CD4-positive, alpha-beta T cell (primary cell): ENCODE measurements at regions of chr16 and their contacts with region 1.

Region 1: GRCh38 chr16:81623363-81624102 is 155.6 kb upstream of the PLCG2 start:
- DNase-seq: peak; percentile 32 to 77 (median 58)
- ATAC-seq: peak; percentile 59
- H3K4me3 ChIP-seq: no peak overlapping the region
- H3K4me3 Mint-ChIP-seq: no peak overlapping the region
- H3K27ac ChIP-seq: no peak overlapping the region
- H3K27ac Mint-ChIP-seq: peak overlapping the region; percentile 43
- H3K4me1 ChIP-seq: peaks cover 12% of the 10 kb centered on the region
- H3K4me1 Mint-ChIP-seq: peaks cover 13% of the 10 kb centered on the region
- H3K27me3 ChIP-seq: no peaks in the 10 kb centered on the region
- H3K27me3 Mint-ChIP-seq: no peaks in the 10 kb centered on the region
- CTCF ChIP-seq: peak; percentile 73

Region 2: GRCh38 chr16:81018496-81018895 is 605.0 kb before region 1 on chr16:
- CTCF ChIA-PET with region 1: no interaction called
- POLR2A ChIA-PET with region 1: no interaction called
- intact Hi-C with region 1: loop called in 1 of 2 experiments (anchors 10 kb)
- DNase-seq: no peak
- ATAC-seq: no peak
- H3K4me3 ChIP-seq: no peak overlapping the region
- H3K4me3 Mint-ChIP-seq: no peak overlapping the region
- H3K27ac ChIP-seq: no peak overlapping the region
- H3K27ac Mint-ChIP-seq: no peak overlapping the region
- H3K4me1 ChIP-seq: no peaks in the 10 kb centered on the region
- H3K4me1 Mint-ChIP-seq: no peaks in the 10 kb centered on the region
- H3K27me3 ChIP-seq: no peaks in the 10 kb centered on the region
- H3K27me3 Mint-ChIP-seq: no peaks in the 10 kb centered on the region
- CTCF ChIP-seq: no peak

Region 3: DNA sequence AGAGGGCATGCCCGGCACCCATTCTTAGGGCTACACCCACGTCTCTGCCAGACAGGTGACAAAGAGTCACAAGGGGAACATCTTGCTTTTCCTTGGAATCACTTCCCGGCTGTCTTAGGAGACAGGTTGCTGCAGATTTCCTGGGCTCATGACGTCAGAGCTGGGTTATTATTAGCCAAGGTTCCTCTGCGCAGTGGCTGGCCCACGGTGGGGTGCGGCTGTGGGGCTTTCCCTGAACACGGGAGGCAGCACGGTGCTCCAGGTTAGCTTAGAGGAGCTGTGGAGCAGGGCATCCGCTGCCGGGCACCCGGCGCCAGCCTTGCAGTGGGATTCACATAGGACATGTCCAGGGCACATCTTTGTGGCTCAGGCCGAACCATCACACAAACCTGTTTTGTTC is 37.5 kb after region 1 on chr16:
- CTCF ChIA-PET with region 1: no interaction called
- POLR2A ChIA-PET with region 1: no interaction called
- intact Hi-C with region 1: loop called in 1 of 2 experiments (anchors 5 kb)
- DNase-seq: no peak
- ATAC-seq: no peak
- H3K4me3 ChIP-seq: no peak overlapping the region
- H3K4me3 Mint-ChIP-seq: no peak overlapping the region
- H3K27ac ChIP-seq: no peak overlapping the region
- H3K27ac Mint-ChIP-seq: no peak overlapping the region
- H3K4me1 ChIP-seq: no peaks in the 10 kb centered on the region
- H3K4me1 Mint-ChIP-seq: no peaks in the 10 kb centered on the region
- H3K27me3 ChIP-seq: no peaks in the 10 kb centered on the region
- H3K27me3 Mint-ChIP-seq: no peaks in the 10 kb centered on the region
- CTCF ChIP-seq: no peak

Region 4: GRCh38 chr16:81696961-81697615 is 73.6 kb after region 1 on chr16:
- CTCF ChIA-PET with region 1: interaction called, 4 read pairs
- POLR2A ChIA-PET with region 1: no interaction called
- intact Hi-C with region 1: loop called in 1 of 2 experiments (anchors 2 kb)
- DNase-seq: peak in 13 of 14 experiments; percentile 29 to 65 (median 46)
- ATAC-seq: peak; percentile 52
- H3K4me3 ChIP-seq: no peak overlapping the region
- H3K4me3 Mint-ChIP-seq: no peak overlapping the region
- H3K27ac ChIP-seq: no peak overlapping the region
- H3K27ac Mint-ChIP-seq: no peak overlapping the region
- H3K4me1 ChIP-seq: no peaks in the 10 kb centered on the region
- H3K4me1 Mint-ChIP-seq: no peaks in the 10 kb centered on the region
- H3K27me3 ChIP-seq: no peaks in the 10 kb centered on the region
- H3K27me3 Mint-ChIP-seq: no peaks in the 10 kb centered on the region
- CTCF ChIP-seq: peak; percentile 60

Region 5: GRCh38 chr16:81723098-81723723 is 99.7 kb after region 1 on chr16:
- CTCF ChIA-PET with region 1: interaction called, 4 read pairs
- POLR2A ChIA-PET with region 1: interaction called, 4 read pairs
- intact Hi-C with region 1: loop called (anchors 1 kb)
- DNase-seq: peak in 10 of 14 experiments; percentile 11 to 86 (median 26)
- ATAC-seq: peak; percentile 67
- H3K4me3 ChIP-seq: no peak overlapping the region
- H3K4me3 Mint-ChIP-seq: no peak overlapping the region
- H3K27ac ChIP-seq: no peak overlapping the region
- H3K27ac Mint-ChIP-seq: peak overlapping the region; percentile 11
- H3K4me1 ChIP-seq: peaks cover 13% of the 10 kb centered on the region
- H3K4me1 Mint-ChIP-seq: peaks cover 15% of the 10 kb centered on the region
- H3K27me3 ChIP-seq: no peaks in the 10 kb centered on the region
- H3K27me3 Mint-ChIP-seq: no peaks in the 10 kb centered on the region
- CTCF ChIP-seq: peak; percentile 85